Astrocyte of the cerebellum (primary cell): ENCODE measurements at regions of chr9 and their contacts with region 1.

Region 1: DNA sequence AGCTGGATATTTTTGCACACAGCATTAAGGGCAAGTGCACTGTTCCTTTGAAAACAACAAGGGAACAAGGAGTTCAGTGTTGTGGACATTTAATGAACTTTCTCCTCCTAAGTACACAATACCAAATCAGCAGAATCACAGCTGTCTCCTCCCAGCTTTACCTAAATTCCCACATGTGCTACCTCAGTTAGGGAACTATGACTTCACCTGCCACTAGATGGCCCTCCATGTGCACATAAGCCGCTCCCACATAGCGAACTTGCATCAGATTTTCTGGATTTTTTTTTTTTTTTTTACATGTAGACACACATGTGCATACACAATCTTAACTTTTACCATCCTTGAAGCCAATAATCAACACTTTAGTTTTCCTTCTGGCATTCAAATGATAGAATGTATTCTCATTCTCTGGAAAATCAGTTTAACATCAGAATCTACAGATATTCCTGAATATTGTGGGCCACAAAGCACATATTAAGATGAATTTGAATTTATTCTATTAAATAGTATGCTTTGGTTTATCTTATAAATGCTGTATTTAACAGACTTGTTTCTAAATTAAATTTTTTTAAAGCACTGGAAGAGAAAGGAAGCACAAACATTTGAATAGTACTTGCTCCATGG is 123.6 kb downstream of the PALM2AKAP2 start:
- DNase-seq: peak; percentile 67
- H3K4me3 ChIP-seq: no peak overlapping the region
- CTCF ChIP-seq: peak; percentile 76

Region 2: GRCh38 chr9:110152704-110153374 is 249.2 kb after region 1 on chr9:
- in situ Hi-C with region 1: loop called (anchors 5 kb)
- DNase-seq: no peak
- H3K4me3 ChIP-seq: no peak overlapping the region
- CTCF ChIP-seq: peak; percentile 72